ENCODE measurements at regions of chr2 and their contacts with region 1.

Region 1: GRCh38 chr2:64831134-64831976 is 157.8 kb upstream of the SLC1A4 start:
- DNase-seq: peak; percentile 70 to 89
- ATAC-seq: peak; percentile 88 to 90 (median 90)
- H3K4me3 ChIP-seq: no peak overlapping the region
- H3K4me3 Mint-ChIP-seq: no peak overlapping the region
- H3K27ac ChIP-seq: no peak overlapping the region
- H3K27ac Mint-ChIP-seq: no peak overlapping the region
- H3K4me1 ChIP-seq: peaks cover 9% of the 10 kb centered on the region
- H3K4me1 Mint-ChIP-seq: no peaks in the 10 kb centered on the region
- H3K27me3 ChIP-seq: no peaks in the 10 kb centered on the region
- H3K27me3 Mint-ChIP-seq: peaks cover 8 to 14% of the 10 kb centered on the region in 2 donors
- CTCF ChIP-seq: peak; percentile 98

Region 2: DNA sequence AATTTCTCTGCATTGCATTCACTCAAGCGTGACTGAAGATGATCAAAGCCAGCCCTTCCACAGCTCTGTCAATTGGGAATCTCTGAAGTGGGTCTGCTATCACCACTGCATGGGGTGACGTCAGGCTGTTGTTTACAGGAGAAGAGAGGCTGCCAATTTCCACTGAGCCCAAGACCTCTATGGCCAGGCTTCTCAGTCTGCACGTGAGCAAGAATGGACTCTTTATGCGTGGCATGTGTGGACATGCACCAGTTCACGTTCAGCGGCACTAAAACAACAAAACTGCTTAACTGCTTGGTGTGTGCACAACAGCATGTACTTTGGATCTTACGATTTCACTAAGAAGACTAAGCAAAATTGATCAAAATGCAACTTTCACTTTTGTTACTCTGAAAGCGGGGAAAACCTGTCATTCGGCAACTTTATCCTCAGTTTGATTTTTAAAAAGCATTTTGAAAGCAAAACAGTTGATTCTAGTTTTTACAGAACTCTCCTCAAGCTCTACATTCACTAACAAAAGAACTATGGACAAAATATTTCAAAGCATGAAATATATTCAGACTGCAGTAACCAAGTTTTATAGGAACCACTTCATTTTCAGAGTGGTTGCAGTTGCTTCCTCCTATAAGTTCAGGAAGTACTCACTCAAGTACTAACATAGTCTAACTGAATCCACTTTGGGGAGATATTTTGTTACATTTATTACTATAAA is 100.6 kb before region 1 on chr2:
- intact Hi-C with region 1: loop called (anchors 5 kb)
- DNase-seq: peak; percentile 28 to 77
- ATAC-seq: peak; percentile 62 to 76 (median 68)
- H3K4me3 ChIP-seq: peak overlapping the region; percentile 38
- H3K4me3 Mint-ChIP-seq: peak overlapping the region; percentile 88
- H3K27ac ChIP-seq: peak overlapping the region; percentile 75
- H3K27ac Mint-ChIP-seq: peak overlapping the region; percentile 90 to 95
- H3K4me1 ChIP-seq: peaks cover 17% of the 10 kb centered on the region
- H3K4me1 Mint-ChIP-seq: peaks cover 38 to 40% of the 10 kb centered on the region in 2 donors
- H3K27me3 ChIP-seq: no peaks in the 10 kb centered on the region
- H3K27me3 Mint-ChIP-seq: no peaks in the 10 kb centered on the region
- CTCF ChIP-seq: no peak